MCF 10A (cell line): ENCODE measurements at regions of chr2 and their contacts with region 1.

Region 1: GRCh38 chr2:219689676-219690628 is 62.5 kb downstream of the SLC4A3 start:
- DNase-seq: peak; percentile 78
- H3K4me3 Mint-ChIP-seq: peak overlapping the region; percentile 57
- H3K27ac Mint-ChIP-seq: peak overlapping the region; percentile 89
- H3K4me1 Mint-ChIP-seq: peaks cover 31% of the 10 kb centered on the region
- H3K27me3 Mint-ChIP-seq: no peaks in the 10 kb centered on the region
- CTCF ChIP-seq: peak; percentile 73

Region 2: GRCh38 chr2:219475697-219476651 is 214.0 kb before region 1 on chr2:
- CTCF ChIA-PET with region 1: no interaction called
- POLR2A ChIA-PET with region 1: no interaction called
- intact Hi-C with region 1: loop called (anchors 1 kb)
- DNase-seq: peak; percentile 67
- H3K4me3 Mint-ChIP-seq: no peak overlapping the region
- H3K27ac Mint-ChIP-seq: no peak overlapping the region
- H3K4me1 Mint-ChIP-seq: no peaks in the 10 kb centered on the region
- H3K27me3 Mint-ChIP-seq: no peaks in the 10 kb centered on the region
- CTCF ChIP-seq: peak; percentile 70

Region 3: GRCh38 chr2:219543601-219544358 is 146.2 kb before region 1 on chr2 and contains the starts of genes CHPF and TMEM198:
- CTCF ChIA-PET with region 1: interaction called, 50 read pairs
- POLR2A ChIA-PET with region 1: interaction called, 55 read pairs
- intact Hi-C with region 1: loop called (anchors 1 kb)
- DNase-seq: peak; percentile 98
- H3K4me3 Mint-ChIP-seq: peak within 1 kb of the TSS; percentile 75
- H3K27ac Mint-ChIP-seq: peak within 1 kb of the TSS; percentile 57
- H3K4me1 Mint-ChIP-seq: peaks cover 12% of the 10 kb centered on the region
- H3K27me3 Mint-ChIP-seq: no peaks in the 10 kb centered on the region
- CTCF ChIP-seq: no peak
- total RNA-seq, gene CHPF: 81.2 and 105 TPM in 2 replicates
- total RNA-seq, gene TMEM198: 5.3 and 6.3 TPM in 2 replicates

Region 4: GRCh38 chr2:219571311-219572236 is 118.4 kb before region 1 on chr2 and contains the start of gene OBSL1:
- CTCF ChIA-PET with region 1: interaction called, 4 read pairs
- POLR2A ChIA-PET with region 1: interaction called, 12 read pairs
- intact Hi-C with region 1: loop called (anchors 1 kb)
- DNase-seq: peak; percentile 60
- H3K4me3 Mint-ChIP-seq: peak within 1 kb of the TSS; percentile 49
- H3K27ac Mint-ChIP-seq: no peak within 1 kb of the TSS
- H3K4me1 Mint-ChIP-seq: peaks cover 7% of the 10 kb centered on the region
- H3K27me3 Mint-ChIP-seq: no peaks in the 10 kb centered on the region
- CTCF ChIP-seq: no peak
- total RNA-seq, gene OBSL1: 29.0 and 29.8 TPM in 2 replicates

Region 5: DNA sequence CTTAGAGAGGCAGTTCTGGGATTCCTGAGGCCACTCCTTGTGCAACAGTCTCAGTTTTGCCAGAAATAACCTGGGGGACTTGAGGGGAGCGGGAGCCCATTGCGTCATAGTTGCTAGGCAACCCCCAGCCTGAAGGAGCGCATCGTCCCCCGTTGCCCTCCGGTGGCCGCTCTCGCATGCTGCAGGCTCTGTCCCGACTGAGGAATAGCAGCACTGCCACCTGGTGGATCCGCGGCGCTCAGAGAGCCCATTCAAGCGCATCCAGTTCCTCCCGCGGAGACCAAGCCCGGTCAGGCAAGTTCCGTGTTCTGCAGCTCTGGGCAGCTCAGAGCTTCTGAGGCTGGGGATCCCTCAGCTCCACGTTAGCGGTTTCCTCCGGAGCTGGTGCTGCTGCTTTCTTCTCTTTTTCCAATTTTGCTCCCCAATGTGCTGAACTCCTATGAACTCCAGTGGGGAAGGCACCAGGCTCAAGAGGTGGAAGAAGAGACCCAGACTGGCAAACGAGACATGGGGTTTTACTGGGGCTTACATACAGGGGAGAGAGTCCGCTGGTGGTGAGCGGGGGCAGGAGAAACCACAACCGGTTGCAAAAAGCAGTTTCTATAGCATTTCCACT is 47.4 kb before region 1 on chr2:
- CTCF ChIA-PET with region 1: interaction called, 220 read pairs
- POLR2A ChIA-PET with region 1: interaction called, 64 read pairs
- intact Hi-C with region 1: loop called (anchors 1 kb)
- DNase-seq: peak; percentile 95
- H3K4me3 Mint-ChIP-seq: no peak overlapping the region
- H3K27ac Mint-ChIP-seq: no peak overlapping the region
- H3K4me1 Mint-ChIP-seq: peaks cover 12% of the 10 kb centered on the region
- H3K27me3 Mint-ChIP-seq: no peaks in the 10 kb centered on the region
- CTCF ChIP-seq: peak; percentile 96

Region 6: GRCh38 chr2:219675221-219675620 is 14.7 kb before region 1 on chr2:
- CTCF ChIA-PET with region 1: interaction called, 20 read pairs
- POLR2A ChIA-PET with region 1: interaction called, 28 read pairs
- intact Hi-C with region 1: no loop called
- DNase-seq: peak; percentile 71
- H3K4me3 Mint-ChIP-seq: no peak overlapping the region
- H3K27ac Mint-ChIP-seq: no peak overlapping the region
- H3K4me1 Mint-ChIP-seq: peaks cover 8% of the 10 kb centered on the region
- H3K27me3 Mint-ChIP-seq: peaks cover 20% of the 10 kb centered on the region
- CTCF ChIP-seq: no peak

Region 7: DNA sequence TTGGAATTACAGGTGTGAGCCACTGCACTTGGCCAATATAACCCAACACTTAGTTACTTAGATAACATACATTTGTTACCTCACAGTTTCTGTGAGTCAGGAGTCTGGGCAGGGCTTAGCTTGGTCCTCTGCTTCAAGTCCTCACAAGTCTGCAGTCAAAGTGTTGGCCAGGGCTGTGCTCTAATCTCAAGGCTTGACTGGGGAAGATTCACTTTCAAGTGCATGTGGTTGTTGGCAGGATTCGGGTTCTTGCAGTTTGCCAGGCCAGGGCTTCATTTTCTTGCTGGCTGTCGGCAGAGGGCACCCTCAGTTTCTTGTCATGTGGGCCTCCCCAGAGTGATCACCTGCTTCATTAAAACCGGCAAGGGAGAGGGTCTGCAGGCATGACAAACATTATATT is 41.2 kb after region 1 on chr2:
- CTCF ChIA-PET with region 1: interaction called, 5 read pairs
- POLR2A ChIA-PET with region 1: interaction called, 12 read pairs
- intact Hi-C with region 1: no loop called
- DNase-seq: peak; percentile 57
- H3K4me3 Mint-ChIP-seq: no peak overlapping the region
- H3K27ac Mint-ChIP-seq: no peak overlapping the region
- H3K4me1 Mint-ChIP-seq: peaks cover 15% of the 10 kb centered on the region
- H3K27me3 Mint-ChIP-seq: no peaks in the 10 kb centered on the region
- CTCF ChIP-seq: no peak

Region 8: DNA sequence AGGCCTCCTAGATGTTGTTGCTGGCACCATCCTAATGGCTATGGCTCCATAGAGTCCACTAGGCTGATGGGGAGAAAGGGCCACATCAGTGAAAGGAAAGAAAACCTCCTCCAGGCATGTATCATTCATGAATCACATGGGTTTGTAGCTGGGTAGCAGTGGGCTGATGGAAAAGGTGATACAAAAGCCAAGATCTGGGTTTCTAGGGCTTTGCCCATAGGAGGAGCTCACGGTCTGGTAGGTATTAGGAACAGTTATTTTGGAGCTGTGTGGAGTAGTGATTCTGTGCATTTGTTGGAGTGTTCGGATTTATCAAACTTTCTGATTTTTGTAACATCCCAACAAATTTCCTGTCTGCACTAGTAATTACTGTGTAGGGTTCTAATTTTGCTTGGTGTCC is 196.7 kb after region 1 on chr2:
- CTCF ChIA-PET with region 1: no interaction called
- POLR2A ChIA-PET with region 1: no interaction called
- intact Hi-C with region 1: no loop called
- DNase-seq: peak; percentile 7
- H3K4me3 Mint-ChIP-seq: no peak overlapping the region
- H3K27ac Mint-ChIP-seq: no peak overlapping the region
- H3K4me1 Mint-ChIP-seq: no peaks in the 10 kb centered on the region
- H3K27me3 Mint-ChIP-seq: no peaks in the 10 kb centered on the region
- CTCF ChIP-seq: peak; percentile 26